ENCODE measurements at regions of chr5 and their contacts with region 1.

Region 1: DNA sequence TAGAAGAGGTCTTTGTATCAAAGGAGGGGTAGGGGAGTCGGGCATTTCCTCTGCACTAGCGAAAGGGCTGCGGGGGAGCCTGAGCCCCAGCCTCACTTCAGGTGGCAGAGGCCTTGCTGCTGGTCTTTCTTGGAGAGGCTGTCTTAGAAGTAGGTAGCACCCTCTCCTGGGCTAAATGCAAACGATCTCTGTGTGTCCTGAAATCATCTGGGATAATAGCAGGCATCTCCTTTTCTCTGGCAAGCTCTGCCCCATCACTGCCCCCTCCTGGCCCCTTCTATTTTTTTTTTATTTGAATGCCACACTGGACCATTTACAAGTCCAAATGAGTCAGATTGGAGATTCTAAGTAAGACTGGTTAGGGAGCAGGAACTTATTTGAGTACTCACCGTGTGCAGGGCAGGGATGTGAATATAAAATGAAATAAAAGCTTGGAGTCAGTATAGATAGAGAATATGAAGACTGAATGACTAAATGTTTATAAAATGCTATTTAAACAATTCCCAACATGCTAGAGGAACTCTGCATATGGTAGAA is 137.1 kb downstream of the FGF1 start:
- DNase-seq: no peak
- H3K4me3 ChIP-seq: no peak overlapping the region
- H3K27ac ChIP-seq: peak overlapping the region; percentile 53
- H3K4me1 ChIP-seq: peaks cover 66% of the 10 kb centered on the region
- H3K27me3 ChIP-seq: peaks cover 12% of the 10 kb centered on the region
- CTCF ChIP-seq: peak; percentile 86

Region 2: DNA sequence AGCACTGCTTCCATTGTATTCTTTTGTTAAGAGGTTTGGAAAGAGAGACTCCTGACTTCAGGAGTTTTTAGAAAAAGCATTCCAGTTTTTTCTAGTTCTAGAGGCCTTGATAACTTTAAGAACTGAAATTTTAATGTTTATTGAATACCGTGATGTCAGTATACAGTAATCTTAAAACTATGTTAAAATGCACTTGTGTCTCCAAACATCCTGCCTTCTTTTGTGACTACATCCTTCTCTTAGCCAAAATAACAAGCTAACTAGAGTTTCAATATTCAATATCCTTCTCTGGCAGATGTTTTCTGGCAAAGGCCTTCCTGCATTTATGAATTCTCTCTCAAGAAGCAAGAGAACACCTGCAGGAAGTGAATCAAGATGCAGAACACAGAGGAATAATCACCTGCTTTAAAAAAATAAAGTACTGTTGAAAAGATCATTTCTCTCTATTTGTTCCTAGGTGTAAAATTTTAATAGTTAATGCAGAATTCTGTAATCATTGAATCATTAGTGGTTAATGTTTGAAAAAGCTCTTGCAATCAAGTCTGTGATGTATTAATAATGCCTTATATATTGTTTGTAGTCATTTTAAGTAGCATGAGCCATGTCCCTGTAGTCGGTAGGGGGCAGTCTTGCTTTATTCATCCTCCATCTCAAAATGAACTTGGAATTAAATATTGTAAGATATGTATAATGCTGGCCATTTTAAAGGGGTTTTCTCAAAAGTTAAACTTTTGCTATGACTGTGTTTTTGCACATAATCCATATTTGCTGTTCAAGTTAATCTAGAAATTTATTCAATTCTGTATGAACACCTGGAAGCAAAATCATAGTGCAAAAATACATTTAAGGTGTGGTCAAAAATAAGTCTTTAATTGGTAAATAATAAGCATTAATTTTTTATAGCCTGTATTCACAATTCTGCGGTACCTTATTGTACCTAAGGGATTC is 397.1 kb before region 1 on chr5:
- intact Hi-C with region 1: loop called (anchors 2 kb)
- DNase-seq: no peak
- H3K4me3 ChIP-seq: no peak overlapping the region
- H3K27ac ChIP-seq: no peak overlapping the region
- H3K4me1 ChIP-seq: peaks cover 18% of the 10 kb centered on the region
- H3K27me3 ChIP-seq: no peaks in the 10 kb centered on the region
- CTCF ChIP-seq: peak; percentile 91

Region 3: GRCh38 chr5:142356716-142357473 is 191.9 kb before region 1 on chr5:
- intact Hi-C with region 1: loop called (anchors 10 kb)
- DNase-seq: peak; percentile 89
- H3K4me3 ChIP-seq: peak overlapping the region; percentile 75
- H3K27ac ChIP-seq: peak overlapping the region; percentile 92
- H3K4me1 ChIP-seq: peaks cover 23% of the 10 kb centered on the region
- H3K27me3 ChIP-seq: no peaks in the 10 kb centered on the region
- CTCF ChIP-seq: peak; percentile 6

Region 4: GRCh38 chr5:142674531-142675469 is 126.0 kb after region 1 on chr5:
- intact Hi-C with region 1: no loop called
- DNase-seq: no peak
- H3K4me3 ChIP-seq: no peak overlapping the region
- H3K27ac ChIP-seq: peak overlapping the region; percentile 72
- H3K4me1 ChIP-seq: peaks cover 51% of the 10 kb centered on the region
- H3K27me3 ChIP-seq: no peaks in the 10 kb centered on the region
- CTCF ChIP-seq: no peak

Region 5: DNA sequence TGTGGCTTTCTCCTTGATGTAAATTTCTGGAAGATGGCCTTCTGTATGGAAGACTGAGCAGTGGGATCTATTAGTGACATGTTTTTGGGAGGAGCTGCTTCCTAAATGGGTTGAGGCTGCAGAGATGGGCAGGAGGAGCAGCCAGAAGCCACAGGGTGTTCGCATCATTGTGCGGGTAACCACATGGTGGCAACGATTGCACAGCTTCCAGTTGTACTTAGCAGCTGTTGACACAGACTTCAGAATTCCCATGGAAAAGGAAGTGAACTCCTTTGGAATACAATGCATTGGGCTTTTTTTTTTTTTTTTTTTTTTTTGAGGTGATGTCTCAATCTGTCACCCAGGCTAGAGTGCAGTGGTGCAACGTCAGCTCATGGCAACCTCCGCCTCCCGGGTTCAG is 557.4 kb after region 1 on chr5:
- intact Hi-C with region 1: no loop called
- DNase-seq: no peak
- H3K4me3 ChIP-seq: no peak overlapping the region
- H3K27ac ChIP-seq: peak overlapping the region; percentile 57
- H3K4me1 ChIP-seq: peaks cover 72% of the 10 kb centered on the region
- H3K27me3 ChIP-seq: no peaks in the 10 kb centered on the region
- CTCF ChIP-seq: peak; percentile 46